ENCODE measurements at regions of chr20 and their contacts with region 1.

Region 1: GRCh38 chr20:54199721-54200176 is 8.1 kb upstream of the PFDN4 start:
- DNase-seq: peak; percentile 54 to 93 (median 84)

Region 2: DNA sequence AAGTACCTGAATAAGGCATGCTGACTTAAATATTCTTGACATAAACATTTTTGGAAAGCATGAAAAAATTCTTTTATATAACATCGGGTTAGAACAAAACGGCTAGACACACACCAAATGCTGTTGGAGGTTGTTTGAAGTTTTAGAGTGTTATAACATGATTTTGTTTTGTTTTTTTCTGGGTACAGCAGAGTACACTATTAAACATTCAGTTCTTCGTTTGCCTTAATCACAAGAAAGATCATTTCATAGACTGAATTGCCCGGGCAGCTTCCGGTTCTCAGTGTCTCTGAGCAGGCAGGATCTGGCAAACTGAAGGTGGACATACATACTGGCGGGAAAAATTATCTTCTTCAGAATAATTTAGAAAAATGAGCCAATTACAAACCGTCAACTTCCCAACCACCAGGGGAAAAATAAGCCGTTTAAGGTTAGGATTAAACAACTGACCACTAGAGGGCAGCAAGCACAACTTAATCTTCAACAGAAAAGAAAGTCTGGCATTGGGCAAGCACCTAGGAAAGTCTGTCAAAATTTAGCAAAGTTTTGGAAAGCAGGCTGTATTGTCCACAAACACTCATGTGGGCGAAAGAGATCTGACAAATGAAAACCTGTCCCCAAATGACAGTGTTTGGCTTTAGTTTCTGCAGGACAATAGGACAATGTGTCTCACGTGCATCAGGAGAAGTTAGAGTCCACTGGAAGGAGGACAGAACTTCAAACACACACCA is 621.1 kb before region 1 on chr20:
- intact Hi-C with region 1: loop called (anchors 5 kb)
- DNase-seq: peak in 28 of 42 donors; percentile 17 to 90 (median 64)

Region 3: DNA sequence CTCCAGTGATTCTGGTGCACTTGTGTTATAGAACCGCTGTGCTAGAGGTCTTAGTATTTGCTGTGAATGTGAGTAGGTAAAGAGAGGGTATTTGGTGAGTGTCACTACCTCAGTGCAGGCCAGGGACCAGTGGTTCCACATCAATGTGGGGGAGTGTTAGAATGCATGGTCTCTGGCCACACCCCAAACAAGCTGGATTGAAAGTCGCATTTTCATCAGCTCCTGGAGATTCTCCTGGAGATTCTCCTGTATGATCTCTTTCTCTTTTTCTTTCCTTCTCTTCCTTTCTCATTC is 102.6 kb before region 1 on chr20:
- intact Hi-C with region 1: loop called (anchors 5 kb)
- DNase-seq: no peak